ENCODE measurements at regions of chr17 and their contacts with region 1.

Region 1: GRCh38 chr17:80263253-80264204 is 2.9 kb downstream of the RNF213 start:
- DNase-seq: peak; percentile 87
- H3K4me3 Mint-ChIP-seq: peak overlapping the region; percentile 91
- H3K27ac Mint-ChIP-seq: peak overlapping the region; percentile 91
- H3K4me1 Mint-ChIP-seq: peaks cover 42% of the 10 kb centered on the region
- H3K27me3 Mint-ChIP-seq: no peaks in the 10 kb centered on the region

Region 2: GRCh38 chr17:80101011-80101945 is 162.3 kb before region 1 on chr17 and contains the start of gene GAA:
- intact Hi-C with region 1: loop called (anchors 5 kb)
- DNase-seq: peak; percentile 84
- H3K4me3 Mint-ChIP-seq: peak within 1 kb of the TSS; percentile 84
- H3K27ac Mint-ChIP-seq: peak within 1 kb of the TSS; percentile 73
- H3K4me1 Mint-ChIP-seq: peaks cover 23% of the 10 kb centered on the region
- H3K27me3 Mint-ChIP-seq: no peaks in the 10 kb centered on the region
- total RNA-seq, gene GAA: 23.6 and 26.1 TPM in 2 replicates

Region 3: DNA sequence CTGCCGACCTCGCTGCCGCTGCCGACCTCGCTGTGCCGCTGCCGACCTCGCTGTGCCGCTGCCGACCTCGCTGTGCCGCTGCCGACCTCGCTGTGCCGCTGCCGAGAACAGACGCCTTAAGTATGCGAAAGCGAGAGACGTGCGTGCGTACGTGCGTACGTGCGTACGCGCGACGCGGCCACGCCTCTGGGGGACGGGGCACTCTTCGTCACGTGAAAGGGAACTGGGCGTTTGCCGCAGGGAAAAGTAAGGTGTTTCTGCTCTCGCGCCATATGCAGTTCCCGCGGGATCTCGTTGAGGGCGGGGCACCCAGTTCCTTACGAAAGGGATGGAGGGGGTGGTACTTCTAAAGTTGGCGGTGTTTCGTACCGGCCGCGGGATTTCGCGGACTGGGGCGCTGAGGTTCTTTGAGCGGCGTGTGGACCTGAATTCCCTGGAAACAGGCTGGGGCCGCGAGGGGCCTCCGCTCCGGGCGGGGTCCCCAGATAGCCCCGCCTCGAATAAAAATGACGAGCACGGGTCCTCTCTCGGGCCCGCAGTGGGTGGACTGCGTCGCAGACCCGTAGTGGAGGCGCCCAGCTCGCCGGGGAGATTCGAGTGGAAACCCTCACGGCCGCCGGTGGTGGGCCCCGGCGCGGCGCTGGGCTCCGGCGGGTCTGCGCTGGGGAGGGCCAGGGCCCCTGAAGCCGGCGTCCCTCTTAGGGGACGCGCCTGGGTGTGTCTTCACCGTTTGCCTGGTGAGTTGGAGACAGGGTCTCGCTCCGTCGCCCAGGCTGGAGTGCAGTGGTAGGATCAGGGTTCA is 116.3 kb before region 1 on chr17 and contains the start of gene EIF4A3:
- intact Hi-C with region 1: loop called (anchors 2 kb)
- DNase-seq: peak; percentile 98
- H3K4me3 Mint-ChIP-seq: peak within 1 kb of the TSS; percentile 97
- H3K27ac Mint-ChIP-seq: peak within 1 kb of the TSS; percentile 94
- H3K4me1 Mint-ChIP-seq: peaks cover 27% of the 10 kb centered on the region
- H3K27me3 Mint-ChIP-seq: no peaks in the 10 kb centered on the region
- total RNA-seq, gene EIF4A3: 167 and 169 TPM in 2 replicates

Region 4: DNA sequence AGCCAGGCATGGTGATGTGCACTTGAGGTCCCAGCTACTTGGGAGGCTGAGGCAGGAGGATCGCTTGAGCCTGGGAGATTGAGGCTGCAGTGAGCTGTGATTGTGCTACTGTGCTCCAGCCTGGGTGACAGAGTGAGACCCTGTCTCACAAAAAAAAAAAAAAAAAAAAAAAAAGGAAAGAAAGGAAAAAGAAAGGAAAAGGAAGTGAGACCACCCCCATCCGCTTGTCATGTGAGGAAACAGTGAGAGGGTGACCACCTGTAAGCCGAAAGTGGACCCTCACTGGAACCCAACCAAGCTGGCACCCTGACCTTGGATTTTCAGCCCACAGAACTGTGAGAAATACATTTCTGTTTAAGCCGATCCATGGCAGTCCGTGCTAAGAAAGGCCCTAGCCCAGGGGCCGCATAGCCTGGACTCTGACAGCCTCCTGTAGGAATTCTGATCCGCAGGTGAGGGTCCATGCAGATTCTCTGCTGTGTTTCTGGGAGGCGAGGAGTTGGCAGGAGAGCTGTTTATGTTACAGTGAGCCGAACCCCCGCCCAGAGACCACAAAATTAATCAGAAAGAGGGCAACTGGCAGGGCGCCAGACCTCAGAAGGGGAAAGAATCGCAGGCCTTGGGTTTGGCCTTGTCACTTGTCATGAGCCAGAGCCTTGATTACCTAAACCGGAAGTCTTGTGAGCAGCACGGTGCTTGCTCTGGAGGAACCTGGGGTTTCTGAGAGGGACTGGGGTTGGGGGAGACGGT is 44.3 kb before region 1 on chr17:
- intact Hi-C with region 1: loop called (anchors 5 kb)
- DNase-seq: peak; percentile 84
- H3K4me3 Mint-ChIP-seq: peak overlapping the region; percentile 87
- H3K27ac Mint-ChIP-seq: peak overlapping the region; percentile 83
- H3K4me1 Mint-ChIP-seq: peaks cover 20% of the 10 kb centered on the region
- H3K27me3 Mint-ChIP-seq: no peaks in the 10 kb centered on the region

Region 5: GRCh38 chr17:80243526-80244433 is 19.7 kb before region 1 on chr17:
- intact Hi-C with region 1: no loop called
- DNase-seq: no peak
- H3K4me3 Mint-ChIP-seq: no peak overlapping the region
- H3K27ac Mint-ChIP-seq: no peak overlapping the region
- H3K4me1 Mint-ChIP-seq: no peaks in the 10 kb centered on the region
- H3K27me3 Mint-ChIP-seq: no peaks in the 10 kb centered on the region